ENCODE measurements at regions of chr21 and their contacts with region 1.

Region 1: DNA sequence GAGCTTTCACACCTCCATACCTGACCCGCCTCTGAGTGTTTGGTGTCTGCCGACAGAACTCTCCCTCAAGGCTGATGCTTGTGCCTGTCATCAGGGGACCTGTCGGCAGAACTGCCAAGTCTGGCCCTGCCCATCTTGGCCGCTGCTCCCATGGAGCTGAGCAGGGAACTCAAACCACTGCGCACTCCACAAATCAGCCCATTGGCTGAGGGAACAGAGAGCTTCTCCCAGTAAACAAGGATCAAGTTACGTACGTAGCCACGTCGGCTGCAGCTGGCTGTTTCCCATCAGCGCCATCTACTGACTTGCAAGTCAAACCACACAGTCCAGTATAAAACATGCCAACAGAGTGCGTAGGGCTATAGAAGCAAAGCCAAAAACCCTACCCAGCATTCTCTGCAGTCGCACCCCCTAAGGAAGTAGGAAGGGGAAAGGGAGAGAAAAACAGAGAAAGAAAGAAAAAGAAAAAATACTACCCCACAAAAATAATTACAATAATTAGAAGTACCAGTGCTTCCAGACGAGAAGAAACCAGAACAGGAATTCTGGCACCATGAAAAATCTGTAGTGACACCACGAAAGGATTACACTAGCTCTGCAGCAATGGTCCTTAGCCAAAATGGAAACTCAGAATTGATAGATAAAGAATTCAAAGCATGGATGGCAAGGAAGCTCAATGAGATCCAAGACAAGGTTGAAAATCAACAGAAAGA is 13.1 kb downstream of the KRTAP13-1 start:
- DNase-seq: peak; percentile 83
- H3K4me3 ChIP-seq: peak overlapping the region in 1 of 3 experiments; percentile 27
- H3K27ac ChIP-seq: no peak overlapping the region
- H3K4me1 ChIP-seq: no peaks in the 10 kb centered on the region
- H3K27me3 ChIP-seq: no peaks in the 10 kb centered on the region
- CTCF ChIP-seq: peak; percentile 82 to 87

Region 2: DNA sequence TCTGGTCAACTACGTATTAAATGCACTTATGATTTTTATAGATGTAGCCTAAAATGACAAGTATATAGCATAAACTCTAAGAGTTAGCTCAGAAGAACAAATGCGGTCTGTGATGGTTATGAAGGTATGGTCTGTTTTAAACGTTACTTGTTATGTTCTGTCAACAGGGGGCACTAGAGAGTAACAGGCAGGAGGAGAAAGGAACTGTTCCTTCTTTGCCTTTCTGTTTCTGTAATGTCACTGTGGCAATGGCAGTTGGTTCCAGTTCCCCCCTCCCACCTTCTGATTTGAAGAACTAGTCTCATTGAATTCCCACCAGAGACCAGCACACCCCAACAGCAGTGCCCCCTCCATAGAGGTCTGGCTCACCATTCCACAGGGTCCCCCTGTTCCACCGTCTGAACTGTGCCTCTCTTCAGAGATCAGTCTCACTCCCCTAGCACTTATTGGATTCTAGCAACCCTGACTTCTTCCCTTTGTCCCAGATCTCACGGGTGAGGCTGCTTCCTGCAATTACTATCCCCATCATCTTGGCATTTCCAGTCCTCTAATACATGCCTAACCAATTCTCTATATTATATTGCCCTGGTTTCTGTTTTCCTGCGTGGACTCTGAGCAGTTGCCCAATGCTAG is 140.2 kb before region 1 on chr21:
- CTCF ChIA-PET with region 1: no interaction called
- dilution Hi-C with region 1: no loop called
- in situ Hi-C with region 1: no loop called
- intact Hi-C with region 1: loop called (anchors 5 kb)
- DNase-seq: no peak
- H3K4me3 ChIP-seq: no peak overlapping the region
- H3K27ac ChIP-seq: no peak overlapping the region
- H3K4me1 ChIP-seq: no peaks in the 10 kb centered on the region
- H3K27me3 ChIP-seq: no peaks in the 10 kb centered on the region
- CTCF ChIP-seq: peak; percentile 36 to 60

Region 3: GRCh38 chr21:30283404-30283803 is 125.5 kb before region 1 on chr21:
- CTCF ChIA-PET with region 1: interaction called, 13 read pairs
- dilution Hi-C with region 1: no loop called
- in situ Hi-C with region 1: no loop called
- intact Hi-C with region 1: no loop called
- DNase-seq: no peak
- H3K4me3 ChIP-seq: no peak overlapping the region
- H3K27ac ChIP-seq: no peak overlapping the region
- H3K4me1 ChIP-seq: no peaks in the 10 kb centered on the region
- H3K27me3 ChIP-seq: no peaks in the 10 kb centered on the region
- CTCF ChIP-seq: no peak

Region 4: DNA sequence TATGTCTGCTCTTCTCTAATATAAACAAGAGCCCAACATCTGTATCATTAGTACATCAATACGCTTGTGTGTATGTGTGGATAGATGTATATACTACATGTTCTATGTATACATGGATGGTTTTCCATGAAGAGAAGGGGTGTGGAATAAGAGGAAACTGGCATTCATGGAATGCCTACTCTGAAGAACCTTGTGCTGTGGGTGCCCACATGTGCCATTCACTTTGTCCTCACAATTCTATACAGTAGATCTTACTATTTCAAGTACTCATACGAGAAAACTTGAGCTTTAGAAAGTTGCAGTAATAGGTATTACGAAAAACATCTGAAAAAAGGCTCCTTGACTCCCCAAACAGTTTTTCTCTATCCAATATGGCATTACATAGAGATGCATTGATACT is 87.2 kb before region 1 on chr21:
- CTCF ChIA-PET with region 1: no interaction called
- dilution Hi-C with region 1: no loop called
- in situ Hi-C with region 1: no loop called
- intact Hi-C with region 1: no loop called
- DNase-seq: no peak
- H3K4me3 ChIP-seq: no peak overlapping the region
- H3K27ac ChIP-seq: no peak overlapping the region
- H3K4me1 ChIP-seq: no peaks in the 10 kb centered on the region
- H3K27me3 ChIP-seq: no peaks in the 10 kb centered on the region
- CTCF ChIP-seq: no peak